GM12878 (cell line): ENCODE measurements at regions of chr10 and their contacts with region 1.

Region 1: GRCh38 chr10:27446091-27446918 is 57.8 kb upstream of the RAB18 start:
- DNase-seq: no peak
- ATAC-seq: peak; percentile 45; the same call in 1 of the 3 replicates
- H3K4me3 ChIP-seq: no peak overlapping the region
- H3K27ac ChIP-seq: no peak overlapping the region
- H3K4me1 ChIP-seq: no peaks in the 10 kb centered on the region
- H3K27me3 ChIP-seq: no peaks in the 10 kb centered on the region
- CTCF ChIP-seq: peak; percentile 17 to 33 (median 26); a peak in 3 of 6 replicates
- EP300 ChIP-seq: no peak
- POLR2A ChIP-seq: no peak
- RAD21 ChIP-seq: peak; percentile 34; the same call in 1 of the 2 replicates

Region 2: GRCh38 chr10:27547482-27547881 is 101.2 kb after region 1 on chr10:
- CTCF ChIA-PET with region 1: no interaction called
- POLR2A ChIA-PET with region 1: no interaction called
- RAD21 ChIA-PET with region 1: no interaction called
- SMC1A ChIA-PET with region 1: no interaction called
- in situ Hi-C with region 1: no loop called
- intact Hi-C with region 1: loop called (anchors 5 kb)
- DNase-seq: no peak
- ATAC-seq: no peak
- H3K4me3 ChIP-seq: no peak overlapping the region
- H3K27ac ChIP-seq: no peak overlapping the region
- H3K4me1 ChIP-seq: no peaks in the 10 kb centered on the region
- H3K27me3 ChIP-seq: no peaks in the 10 kb centered on the region
- CTCF ChIP-seq: no peak
- EP300 ChIP-seq: no peak
- POLR2A ChIP-seq: no peak
- RAD21 ChIP-seq: no peak

Region 3: GRCh38 chr10:27654284-27654683 is 208.0 kb after region 1 on chr10:
- CTCF ChIA-PET with region 1: interaction called, 8 read pairs
- POLR2A ChIA-PET with region 1: no interaction called
- RAD21 ChIA-PET with region 1: interaction called, 3 read pairs
- SMC1A ChIA-PET with region 1: interaction called, 5 read pairs
- in situ Hi-C with region 1: loop called (anchors 5 kb)
- intact Hi-C with region 1: loop called (anchors 5 kb)
- DNase-seq: no peak
- ATAC-seq: no peak
- H3K4me3 ChIP-seq: no peak overlapping the region
- H3K27ac ChIP-seq: no peak overlapping the region
- H3K4me1 ChIP-seq: no peaks in the 10 kb centered on the region
- H3K27me3 ChIP-seq: no peaks in the 10 kb centered on the region
- CTCF ChIP-seq: no peak
- EP300 ChIP-seq: no peak
- POLR2A ChIP-seq: no peak
- RAD21 ChIP-seq: no peak

Region 4: DNA sequence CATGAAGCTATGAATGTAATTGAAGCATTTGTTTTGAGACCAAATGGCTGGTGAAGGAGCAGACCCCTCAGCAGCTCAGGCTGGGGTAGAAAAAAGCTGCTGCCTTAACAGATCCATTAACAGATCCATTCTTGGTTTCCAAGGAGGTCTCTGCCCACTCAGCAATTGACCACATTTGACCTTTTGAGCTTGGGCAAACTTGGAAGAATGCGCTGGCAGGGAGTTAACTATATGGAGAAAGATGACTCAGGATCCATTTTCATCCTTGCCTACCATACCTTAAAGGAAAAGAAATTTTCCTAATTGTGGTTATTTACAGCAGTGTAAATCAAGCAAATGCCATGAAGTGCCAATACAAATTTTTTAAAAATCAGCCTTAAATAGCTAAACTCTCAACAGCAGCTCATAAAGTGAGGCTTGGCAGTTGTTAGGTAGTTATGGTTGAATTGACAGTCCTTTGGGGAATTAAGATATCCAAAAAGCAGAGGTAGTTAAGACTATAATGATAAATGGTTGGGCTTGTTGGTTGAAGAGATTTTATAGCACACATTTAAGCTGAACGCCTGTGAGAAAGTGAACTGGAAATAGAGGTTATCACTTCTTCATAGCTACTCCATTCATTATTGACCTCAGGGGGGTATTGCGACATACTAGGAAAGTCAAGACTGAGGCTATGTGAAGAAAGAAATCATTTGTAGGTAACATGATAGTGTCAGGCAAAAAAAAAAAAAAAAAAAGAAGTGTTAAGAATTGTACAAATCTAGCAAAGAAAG is 215.4 kb after region 1 on chr10:
- CTCF ChIA-PET with region 1: interaction called, 8 read pairs
- POLR2A ChIA-PET with region 1: no interaction called
- RAD21 ChIA-PET with region 1: interaction called, 3 read pairs
- SMC1A ChIA-PET with region 1: interaction called, 5 read pairs
- in situ Hi-C with region 1: no loop called
- intact Hi-C with region 1: loop called (anchors 5 kb)
- DNase-seq: no peak
- ATAC-seq: no peak
- H3K4me3 ChIP-seq: no peak overlapping the region
- H3K27ac ChIP-seq: no peak overlapping the region
- H3K4me1 ChIP-seq: no peaks in the 10 kb centered on the region
- H3K27me3 ChIP-seq: no peaks in the 10 kb centered on the region
- CTCF ChIP-seq: no peak
- EP300 ChIP-seq: no peak
- POLR2A ChIP-seq: no peak
- RAD21 ChIP-seq: no peak